Activated CD4-positive, alpha-beta memory T cell treated with anti-CD3 and anti-CD28 coated beads, Interleukin-2, amount 10 ng/mL, durations not matched to agents 7 days and 5 days (primary cell): ENCODE measurements at regions of chr12 and their contacts with region 1.

Region 1: DNA sequence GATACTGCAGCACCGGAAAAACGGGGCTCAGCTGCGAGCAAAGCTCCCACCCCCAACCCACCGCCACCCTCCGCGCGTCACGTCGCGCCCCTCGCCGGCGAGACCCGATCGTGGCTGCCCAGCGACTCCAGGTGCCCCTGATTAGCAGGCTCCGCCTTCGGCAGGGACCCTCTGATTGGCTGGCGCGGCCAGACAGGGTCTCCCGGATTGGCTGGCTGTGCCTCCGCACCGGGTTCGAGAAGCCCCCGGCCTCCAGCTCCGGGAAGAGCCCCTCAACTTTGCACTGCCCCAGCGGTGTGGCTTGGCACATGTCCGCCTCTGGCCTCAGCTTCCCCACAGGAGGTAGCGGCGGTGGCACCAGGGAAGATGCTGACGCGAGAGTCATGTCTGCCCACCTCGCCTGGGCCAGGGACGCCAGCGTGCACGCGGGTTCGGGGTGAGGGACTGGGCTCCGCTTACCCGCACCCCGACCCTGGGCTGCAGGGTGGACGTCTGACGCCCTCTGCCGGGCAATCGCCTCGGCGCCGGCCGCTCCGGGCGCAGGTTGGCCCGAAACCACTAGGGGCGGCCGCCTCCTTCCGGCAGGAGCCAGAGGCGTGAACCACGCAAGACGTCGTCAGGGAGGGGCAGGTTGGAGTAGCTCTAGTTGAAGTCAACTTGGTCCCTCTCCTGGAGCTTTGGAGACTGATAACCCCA is 498 bp upstream of the RHOF start:
- DNase-seq: peak; percentile 97
- H3K4me3 Mint-ChIP-seq: peak overlapping the region; percentile 92
- H3K27ac Mint-ChIP-seq: peak overlapping the region; percentile 90
- H3K4me1 Mint-ChIP-seq: peaks cover 60% of the 10 kb centered on the region
- H3K27me3 Mint-ChIP-seq: no peaks in the 10 kb centered on the region

Region 2: GRCh38 chr12:121688966-121689365 is 105.0 kb before region 1 on chr12:
- CTCF ChIA-PET with region 1: interaction called, 37 read pairs
- POLR2A ChIA-PET with region 1: interaction called, 4 read pairs
- DNase-seq: no peak
- H3K4me3 Mint-ChIP-seq: no peak overlapping the region
- H3K27ac Mint-ChIP-seq: no peak overlapping the region
- H3K4me1 Mint-ChIP-seq: peaks cover 15% of the 10 kb centered on the region
- H3K27me3 Mint-ChIP-seq: peaks cover 2% of the 10 kb centered on the region

Region 3: DNA sequence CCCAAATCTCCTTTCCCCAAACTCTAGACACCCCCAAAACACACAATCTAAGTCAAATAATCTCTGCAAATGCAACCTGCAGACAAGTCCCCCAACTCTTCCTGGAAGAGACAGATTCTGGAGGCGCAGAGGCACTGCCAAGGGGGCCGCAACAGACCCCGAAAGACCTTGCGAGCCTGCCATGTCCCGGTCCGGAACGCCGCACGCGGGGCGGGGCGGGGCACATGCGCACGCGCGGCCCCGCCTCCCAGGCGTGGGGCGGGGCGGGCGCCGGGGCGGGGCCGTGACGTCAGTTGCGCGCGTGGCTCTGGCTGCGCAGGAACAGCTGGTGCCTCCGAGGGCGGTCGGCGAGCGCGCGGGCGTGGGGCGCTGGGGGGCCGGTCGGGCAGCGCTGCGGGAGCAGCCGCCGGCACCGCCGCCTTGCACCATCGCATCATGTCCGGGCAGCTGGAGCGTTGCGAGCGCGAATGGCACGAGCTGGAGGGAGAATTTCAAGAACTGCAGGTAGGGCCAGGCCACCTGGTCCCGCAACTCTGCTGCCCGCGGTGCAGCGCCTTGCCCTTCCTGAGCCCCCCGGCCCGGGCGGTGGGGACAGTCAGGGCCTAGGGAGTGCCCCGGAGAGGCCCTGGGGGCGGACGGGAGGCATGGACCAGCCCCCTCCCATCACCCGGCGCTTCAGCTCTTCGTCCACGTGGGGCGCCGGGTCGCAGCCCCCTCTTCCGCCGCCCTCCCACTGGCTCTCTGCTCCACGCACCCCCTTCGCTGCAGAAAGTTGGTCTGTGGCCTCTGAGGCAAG is 81.3 kb before region 1 on chr12 and contains the start of gene TMEM120B:
- CTCF ChIA-PET with region 1: interaction called, 60 read pairs
- POLR2A ChIA-PET with region 1: interaction called, 36 read pairs
- DNase-seq: peak; percentile 87
- H3K4me3 Mint-ChIP-seq: peak within 1 kb of the TSS; percentile 93
- H3K27ac Mint-ChIP-seq: peak within 1 kb of the TSS; percentile 88
- H3K4me1 Mint-ChIP-seq: peaks cover 25% of the 10 kb centered on the region
- H3K27me3 Mint-ChIP-seq: no peaks in the 10 kb centered on the region
- total RNA-seq, gene TMEM120B: 5.1 to 5.8 TPM

Region 4: GRCh38 chr12:121773011-121773777 is 20.8 kb before region 1 on chr12:
- CTCF ChIA-PET with region 1: interaction called, 380 read pairs
- POLR2A ChIA-PET with region 1: interaction called, 1,170 read pairs
- DNase-seq: peak; percentile 86
- H3K4me3 Mint-ChIP-seq: no peak overlapping the region
- H3K27ac Mint-ChIP-seq: peak overlapping the region; percentile 64
- H3K4me1 Mint-ChIP-seq: peaks cover 16% of the 10 kb centered on the region
- H3K27me3 Mint-ChIP-seq: no peaks in the 10 kb centered on the region

Region 5: DNA sequence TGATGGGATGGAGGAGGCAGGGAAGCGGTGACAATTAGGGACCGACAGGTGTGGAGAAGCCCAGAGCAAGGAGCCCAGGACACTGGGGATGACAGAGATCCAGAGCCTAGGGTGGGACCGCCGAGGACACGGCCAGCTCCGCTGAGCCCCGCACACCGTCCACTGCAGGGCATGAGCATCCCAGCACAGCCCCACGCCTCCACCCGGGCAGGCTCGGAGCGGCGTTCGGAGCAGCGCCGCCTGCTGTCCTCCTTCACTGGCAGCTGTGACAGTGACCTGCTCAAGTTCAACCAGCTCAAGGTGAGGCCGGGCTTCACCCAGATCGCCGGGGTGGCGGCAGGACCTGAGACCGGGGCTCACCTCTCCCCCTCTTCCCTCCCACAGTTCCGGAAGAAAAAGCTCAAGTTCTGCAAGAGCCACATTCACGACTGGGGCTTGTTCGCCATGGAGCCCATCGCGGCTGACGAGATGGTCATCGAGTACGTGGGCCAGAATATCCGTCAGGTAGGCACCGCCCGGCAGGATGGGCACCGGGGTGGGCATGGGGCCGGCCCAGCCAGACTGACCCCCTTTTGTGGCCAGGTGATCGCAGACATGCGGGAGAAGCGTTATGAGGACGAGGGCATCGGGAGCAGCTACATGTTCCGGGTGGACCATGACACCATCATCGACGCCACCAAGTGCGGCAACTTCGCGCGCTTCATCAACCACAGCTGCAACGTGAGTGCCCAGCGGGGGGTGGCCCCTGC is 33.5 kb after region 1 on chr12:
- CTCF ChIA-PET with region 1: interaction called, 16 read pairs
- POLR2A ChIA-PET with region 1: interaction called, 3 read pairs
- DNase-seq: no peak
- H3K4me3 Mint-ChIP-seq: no peak overlapping the region
- H3K27ac Mint-ChIP-seq: no peak overlapping the region
- H3K4me1 Mint-ChIP-seq: no peaks in the 10 kb centered on the region
- H3K27me3 Mint-ChIP-seq: no peaks in the 10 kb centered on the region

Region 6: GRCh38 chr12:121888478-121889266 is 94.7 kb after region 1 on chr12 and contains the start of gene PSMD9:
- CTCF ChIA-PET with region 1: interaction called, 83 read pairs
- POLR2A ChIA-PET with region 1: interaction called, 43 read pairs
- DNase-seq: peak; percentile 99
- H3K4me3 Mint-ChIP-seq: peak within 1 kb of the TSS; percentile 96
- H3K27ac Mint-ChIP-seq: peak within 1 kb of the TSS; percentile 99
- H3K4me1 Mint-ChIP-seq: peaks cover 45% of the 10 kb centered on the region
- H3K27me3 Mint-ChIP-seq: no peaks in the 10 kb centered on the region
- total RNA-seq, gene PSMD9: 56.3 to 59.7 TPM